ENCODE measurements at regions of chr5 and their contacts with region 1.

Region 1: DNA sequence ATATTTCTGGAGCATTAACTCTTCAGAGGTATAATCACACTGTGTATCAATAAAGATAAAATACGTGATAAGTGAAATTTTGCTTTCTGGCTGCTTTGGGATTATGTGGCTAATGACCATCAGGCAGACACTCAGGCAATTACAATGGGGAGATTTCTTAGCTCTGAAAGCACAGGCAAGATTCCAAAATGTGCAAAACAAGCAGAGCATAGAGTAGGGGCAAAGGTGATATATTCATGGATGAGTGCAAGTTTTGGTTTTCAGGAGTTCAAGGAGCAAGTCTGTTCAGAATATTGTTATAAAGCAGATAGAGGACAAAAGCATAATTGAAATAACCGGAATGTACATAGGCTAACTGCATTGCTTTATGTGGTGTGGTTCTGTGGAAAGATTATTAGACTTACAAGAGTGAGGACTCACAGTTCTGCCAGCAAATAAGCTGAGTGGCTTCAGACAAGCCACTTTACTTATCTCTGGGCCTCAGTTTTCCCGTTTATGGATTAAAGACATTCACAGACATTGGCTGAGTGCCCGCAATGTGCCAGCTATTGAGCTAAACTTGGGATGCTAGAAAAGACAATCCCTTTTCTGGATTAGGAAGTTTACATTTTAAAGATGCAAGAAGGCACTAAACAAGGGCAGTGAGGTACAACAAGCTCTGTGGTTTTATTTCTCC is 945.6 kb upstream of the ARRDC3 start:
- DNase-seq: peak; percentile 73
- ATAC-seq: peak; percentile 83

Region 2: DNA sequence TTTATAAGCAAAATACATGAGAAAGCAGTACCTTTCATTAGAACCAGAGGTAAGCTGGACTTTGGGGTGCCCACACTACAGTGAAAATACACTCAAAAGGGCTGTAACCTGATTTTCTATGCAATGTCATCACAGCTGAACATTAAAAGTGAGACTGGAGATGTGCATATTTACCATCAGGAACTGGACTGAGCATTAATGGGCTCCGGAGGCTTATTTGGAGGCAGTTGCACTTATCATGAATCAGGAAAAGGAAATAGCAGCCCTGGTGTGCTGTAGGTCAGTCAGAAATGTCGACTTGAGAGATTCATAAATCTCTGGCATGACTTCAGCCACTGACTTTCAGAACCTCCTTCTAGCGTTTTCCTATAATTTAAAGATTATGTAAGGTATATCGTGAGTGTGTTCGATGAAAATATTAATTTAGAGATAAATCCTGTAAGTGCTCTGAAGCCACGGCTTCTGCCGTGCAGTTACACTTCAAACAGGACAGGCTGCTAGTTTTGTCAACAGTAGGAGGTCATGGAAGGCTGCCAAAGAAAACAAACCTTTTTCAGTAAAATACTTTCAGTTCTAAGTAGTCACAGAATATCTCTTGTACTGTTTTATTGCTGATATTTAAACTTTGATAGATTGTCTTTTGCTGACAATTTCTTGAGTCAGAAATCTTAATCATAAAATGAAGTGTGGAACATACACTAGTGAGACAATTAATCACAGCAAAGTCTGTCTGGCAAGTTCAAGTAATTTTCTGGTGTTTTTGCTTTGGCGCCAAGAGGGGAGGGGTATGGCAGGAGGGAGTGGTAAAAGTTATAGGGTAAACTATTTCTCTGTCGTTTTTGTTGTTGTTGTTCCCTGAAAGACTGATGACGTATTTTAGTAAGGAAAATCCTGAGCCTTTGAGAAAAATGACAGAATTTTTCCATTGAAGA is 312.6 kb after region 1 on chr5:
- intact Hi-C with region 1: loop called (anchors 10 kb)
- DNase-seq: no peak
- ATAC-seq: peak; percentile 57

Measured in Right ventricle myocardium inferior (tissue), 1 donor.